ENCODE measurements at regions of chr12 and their contacts with region 1.

Region 1: DNA sequence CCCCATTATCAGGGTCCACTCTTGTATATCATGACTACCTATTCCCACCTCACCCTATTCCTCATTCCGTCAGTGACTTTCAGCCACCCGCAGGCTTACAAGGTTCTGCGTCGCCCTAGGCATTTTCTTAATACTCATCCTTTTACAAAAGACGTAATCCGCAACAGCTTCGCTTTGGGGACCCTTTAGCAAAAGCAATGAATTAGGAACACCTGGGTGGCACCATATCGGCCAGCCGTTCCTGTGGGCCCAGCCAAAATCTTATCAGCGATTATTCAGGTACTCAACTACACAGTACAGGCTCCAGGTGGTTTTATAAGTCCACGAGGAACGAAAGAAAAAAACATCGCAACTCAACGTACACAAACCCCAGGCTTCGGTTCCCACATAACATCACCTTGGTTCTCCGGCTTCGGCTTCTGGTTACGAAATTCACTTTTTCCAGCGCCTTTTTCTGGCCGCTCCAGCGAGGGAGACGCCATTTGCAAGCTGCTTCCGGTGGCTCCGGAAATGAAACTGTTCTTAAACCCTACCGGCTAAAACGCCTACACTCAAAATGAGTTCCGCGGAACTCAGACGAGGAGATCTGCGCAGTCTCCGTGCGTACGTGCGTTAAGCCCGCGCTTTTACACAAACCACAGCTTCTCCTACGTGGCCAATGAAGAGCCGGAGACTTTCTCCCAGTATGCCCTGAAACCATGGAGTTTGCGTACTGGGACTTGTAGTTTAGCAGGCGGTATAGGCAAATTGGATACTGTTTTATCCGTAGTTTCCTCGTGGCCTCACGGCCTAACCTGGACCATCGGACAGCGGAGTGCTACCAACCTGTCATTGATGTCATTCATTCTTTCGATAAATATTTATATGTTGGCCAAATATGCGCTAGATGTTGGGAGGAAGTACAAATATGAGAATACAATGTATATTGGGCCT is at the start of gene KRR1:
- DNase-seq: peak; percentile 72
- ATAC-seq: peak; percentile 96
- H3K4me3 Mint-ChIP-seq: peak within 1 kb of the TSS; percentile 99
- H3K27ac Mint-ChIP-seq: peak within 1 kb of the TSS; percentile 99
- H3K4me1 Mint-ChIP-seq: peaks cover 27% of the 10 kb centered on the region
- H3K27me3 Mint-ChIP-seq: no peaks in the 10 kb centered on the region
- CTCF ChIP-seq: no peak
- total RNA-seq, gene KRR1: 75.0 and 85.1 TPM in 2 replicates

Region 2: DNA sequence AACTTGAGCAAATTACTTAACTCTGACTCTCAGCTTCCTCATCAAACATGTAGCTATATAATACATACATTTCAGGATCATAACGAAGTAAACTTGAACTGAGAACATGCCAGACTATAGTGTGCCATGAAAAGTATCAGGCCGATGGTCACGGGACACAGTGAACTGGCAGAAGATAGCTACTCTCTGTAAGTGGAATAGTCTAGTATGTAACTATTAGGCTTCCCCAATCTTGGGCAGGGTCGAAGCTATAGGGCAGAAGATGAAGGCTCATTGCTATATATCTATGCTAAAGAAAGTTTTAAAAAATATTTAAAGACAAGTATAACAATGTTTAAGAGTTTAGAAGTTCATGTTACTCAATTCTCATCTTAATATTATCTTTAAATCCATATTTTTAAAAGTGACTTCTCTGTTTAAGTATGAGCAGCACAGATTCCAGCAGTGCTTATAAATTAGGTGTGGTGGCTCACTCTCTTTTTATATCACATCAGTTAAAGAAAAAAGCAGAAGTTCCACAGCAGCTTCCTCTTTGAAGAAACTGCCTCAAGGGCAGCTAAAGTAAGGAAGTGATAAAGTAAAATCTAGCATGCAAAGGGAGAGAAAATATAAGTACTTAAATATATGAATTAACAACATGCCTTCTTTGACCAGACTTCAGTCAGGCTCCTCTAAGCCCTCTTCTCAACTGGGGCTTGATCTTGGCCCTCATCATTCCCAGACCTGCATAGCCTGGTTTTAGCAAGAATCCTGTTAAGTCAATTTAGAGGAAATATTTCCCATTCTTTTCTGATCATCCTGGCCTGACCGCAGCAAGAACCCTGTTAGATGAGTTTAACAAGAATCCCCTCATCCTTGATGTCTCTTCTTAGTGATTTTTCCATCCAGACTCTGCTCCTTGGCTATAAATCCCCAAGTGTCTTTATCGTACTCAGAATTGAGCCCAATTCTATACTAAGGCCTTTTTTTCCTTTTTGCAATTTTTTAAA is 39.2 kb before region 1 on chr12:
- CTCF ChIA-PET with region 1: no interaction called
- POLR2A ChIA-PET with region 1: interaction called, 41 read pairs
- intact Hi-C with region 1: loop called (anchors 1 kb)
- DNase-seq: no peak
- ATAC-seq: peak; percentile 86
- H3K4me3 Mint-ChIP-seq: peak overlapping the region; percentile 66
- H3K27ac Mint-ChIP-seq: peak overlapping the region; percentile 98
- H3K4me1 Mint-ChIP-seq: peaks cover 43% of the 10 kb centered on the region
- H3K27me3 Mint-ChIP-seq: peaks cover 2% of the 10 kb centered on the region
- CTCF ChIP-seq: no peak

Measured in activated B cell treated with CpG ODN at 0.5 μM for 24 hours (primary cell).